Dendritic cell treated with granulocyte-macrophage colony-stimulating factor and Interleukin-4, amounts not matched to agents 40 ng/mL and 50 ng/mL, for 4 days (primary cell): ENCODE measurements at regions of chr14 and their contacts with region 1.

Region 1: DNA sequence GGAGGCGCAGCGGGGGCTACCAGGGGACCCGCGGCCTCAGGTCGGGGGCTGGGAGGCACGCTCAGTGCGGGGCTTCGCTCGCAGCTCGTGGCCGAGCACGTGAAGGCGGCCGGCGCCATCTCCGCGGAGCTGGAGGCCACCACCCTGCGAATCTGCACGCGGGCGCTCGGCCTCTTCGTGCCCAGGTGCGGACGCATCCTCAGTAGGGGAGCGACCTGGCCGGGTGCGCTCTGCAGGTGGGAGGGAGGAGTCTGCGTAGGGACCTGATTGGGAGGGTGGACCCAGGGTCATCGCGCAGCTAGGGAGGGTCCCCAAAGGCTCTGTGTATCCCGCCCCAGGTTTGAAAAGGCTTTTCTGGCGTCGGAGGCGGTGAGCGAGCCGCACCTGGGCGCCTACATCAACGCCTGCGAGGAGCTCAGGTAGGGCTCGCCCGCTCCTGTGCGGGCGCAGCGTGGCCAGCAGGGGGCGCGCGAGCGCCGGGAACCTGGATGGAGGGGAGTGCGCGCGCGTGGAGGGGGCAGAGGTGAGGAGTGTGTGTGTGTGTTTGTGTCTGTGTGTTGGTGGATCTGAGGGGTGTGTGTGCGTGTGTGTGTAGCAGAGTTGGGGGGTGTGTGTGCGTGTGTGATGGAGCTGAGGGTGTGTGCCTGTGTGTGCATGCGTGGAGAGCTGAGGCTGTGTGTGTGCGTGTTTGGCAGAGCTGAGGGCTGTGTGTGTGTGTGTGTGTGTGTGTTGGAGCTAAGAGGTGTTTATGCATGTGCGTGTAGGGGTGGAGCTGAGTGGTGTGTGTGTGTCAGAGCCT is 10.3 kb downstream of the EXOC3L4 start:
- H3K4me3 Mint-ChIP-seq: no peak overlapping the region
- H3K27ac Mint-ChIP-seq: no peak overlapping the region
- H3K4me1 Mint-ChIP-seq: peaks cover 44% of the 10 kb centered on the region
- H3K27me3 Mint-ChIP-seq: peaks cover 66% of the 10 kb centered on the region

Region 2: DNA sequence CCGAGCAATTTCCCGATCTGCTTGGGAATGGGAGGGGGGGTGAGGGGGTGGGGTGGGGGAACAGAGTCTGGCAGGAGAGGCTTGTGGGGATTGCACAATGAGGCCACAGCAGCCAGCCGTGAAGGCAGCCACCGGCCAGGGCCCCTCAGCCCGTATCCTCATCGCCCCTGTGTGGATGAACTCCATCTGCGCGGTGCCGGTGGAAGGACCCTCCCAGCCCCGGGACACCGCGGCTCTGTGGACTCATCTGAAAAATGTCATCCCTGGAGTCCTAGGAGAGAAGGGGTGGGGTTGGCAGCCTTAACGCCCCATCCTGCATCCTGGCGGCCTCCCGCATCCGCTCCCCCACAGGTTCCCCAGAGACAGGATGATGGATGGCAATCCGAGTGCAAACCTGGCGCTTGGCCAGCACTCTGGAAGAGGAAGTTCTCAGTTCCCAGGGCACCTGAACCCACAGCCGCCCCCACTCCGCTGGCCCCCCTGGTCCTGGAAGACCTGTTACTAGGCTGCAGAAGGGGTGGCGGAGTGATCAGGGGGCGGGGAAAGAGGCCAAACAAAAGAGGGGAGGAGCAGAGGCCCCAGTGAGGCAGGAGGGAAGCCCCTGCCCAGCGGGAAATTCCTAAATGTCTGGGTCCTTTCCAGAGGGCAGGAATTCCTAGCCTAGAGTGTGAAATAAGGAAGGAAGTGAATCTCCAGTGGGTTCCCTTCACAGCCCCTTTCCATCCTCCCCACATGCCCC is 17.2 kb after region 1 on chr14:
- intact Hi-C with region 1: loop called (anchors 2 kb)
- H3K4me3 Mint-ChIP-seq: peak overlapping the region; percentile 88
- H3K27ac Mint-ChIP-seq: peak overlapping the region; percentile 92
- H3K4me1 Mint-ChIP-seq: peaks cover 80% of the 10 kb centered on the region
- H3K27me3 Mint-ChIP-seq: no peaks in the 10 kb centered on the region

Region 3: GRCh38 chr14:103141119-103141796 is 36.4 kb after region 1 on chr14:
- intact Hi-C with region 1: loop called (anchors 2 kb)
- H3K4me3 Mint-ChIP-seq: no peak overlapping the region
- H3K27ac Mint-ChIP-seq: no peak overlapping the region
- H3K4me1 Mint-ChIP-seq: peaks cover 42% of the 10 kb centered on the region
- H3K27me3 Mint-ChIP-seq: peaks cover 34% of the 10 kb centered on the region

Region 4: GRCh38 chr14:103185051-103185992 is 80.5 kb after region 1 on chr14:
- intact Hi-C with region 1: loop called (anchors 1 kb)
- H3K4me3 Mint-ChIP-seq: no peak overlapping the region
- H3K27ac Mint-ChIP-seq: no peak overlapping the region
- H3K4me1 Mint-ChIP-seq: peaks cover 6% of the 10 kb centered on the region
- H3K27me3 Mint-ChIP-seq: peaks cover 52% of the 10 kb centered on the region

Region 5: GRCh38 chr14:103292426-103293374 is 187.8 kb after region 1 on chr14:
- intact Hi-C with region 1: loop called (anchors 2 kb)
- H3K4me3 Mint-ChIP-seq: no peak overlapping the region
- H3K27ac Mint-ChIP-seq: no peak overlapping the region
- H3K4me1 Mint-ChIP-seq: no peaks in the 10 kb centered on the region
- H3K27me3 Mint-ChIP-seq: peaks cover 41% of the 10 kb centered on the region